Activated CD4-positive, alpha-beta memory T cell treated with anti-CD3 and anti-CD28 coated beads, Interleukin-2, amount 10 ng/mL, durations not matched to agents 7 days and 5 days (primary cell): ENCODE measurements at regions of chr4 and their contacts with region 1.

Region 1: GRCh38 chr4:40897557-40898203 is 147.9 kb downstream of the NSUN7 start:
- DNase-seq: peak; percentile 58
- H3K4me3 Mint-ChIP-seq: no peak overlapping the region
- H3K27ac Mint-ChIP-seq: no peak overlapping the region
- H3K4me1 Mint-ChIP-seq: peaks cover 7% of the 10 kb centered on the region
- H3K27me3 Mint-ChIP-seq: no peaks in the 10 kb centered on the region

Region 2: DNA sequence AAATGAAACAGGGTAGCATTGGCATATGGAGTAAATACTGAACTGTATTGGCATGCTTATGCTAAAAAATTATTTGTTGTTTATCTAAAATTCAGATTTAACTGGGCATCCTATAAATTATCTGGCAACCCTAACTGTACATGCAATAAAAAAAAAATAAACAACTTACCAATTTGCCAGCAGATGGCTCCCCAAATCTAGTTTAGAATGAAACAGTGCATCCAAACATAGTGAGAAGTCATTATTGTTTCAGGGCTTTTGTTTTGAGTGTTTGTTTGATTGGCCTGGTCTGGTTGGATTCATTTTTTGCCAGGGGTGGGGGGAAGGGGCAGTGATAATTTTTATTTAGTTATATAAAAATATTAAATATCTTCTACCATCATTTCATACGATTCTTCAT is 160.8 kb before region 1 on chr4:
- CTCF ChIA-PET with region 1: interaction called, 13 read pairs
- POLR2A ChIA-PET with region 1: no interaction called
- DNase-seq: no peak
- H3K4me3 Mint-ChIP-seq: no peak overlapping the region
- H3K27ac Mint-ChIP-seq: no peak overlapping the region
- H3K4me1 Mint-ChIP-seq: peaks cover 16% of the 10 kb centered on the region
- H3K27me3 Mint-ChIP-seq: peaks cover 20% of the 10 kb centered on the region

Region 3: GRCh38 chr4:40887288-40888131 is 10.2 kb before region 1 on chr4:
- CTCF ChIA-PET with region 1: interaction called, 13 read pairs
- POLR2A ChIA-PET with region 1: no interaction called
- DNase-seq: no peak
- H3K4me3 Mint-ChIP-seq: no peak overlapping the region
- H3K27ac Mint-ChIP-seq: no peak overlapping the region
- H3K4me1 Mint-ChIP-seq: no peaks in the 10 kb centered on the region
- H3K27me3 Mint-ChIP-seq: peaks cover 18% of the 10 kb centered on the region

Region 4: DNA sequence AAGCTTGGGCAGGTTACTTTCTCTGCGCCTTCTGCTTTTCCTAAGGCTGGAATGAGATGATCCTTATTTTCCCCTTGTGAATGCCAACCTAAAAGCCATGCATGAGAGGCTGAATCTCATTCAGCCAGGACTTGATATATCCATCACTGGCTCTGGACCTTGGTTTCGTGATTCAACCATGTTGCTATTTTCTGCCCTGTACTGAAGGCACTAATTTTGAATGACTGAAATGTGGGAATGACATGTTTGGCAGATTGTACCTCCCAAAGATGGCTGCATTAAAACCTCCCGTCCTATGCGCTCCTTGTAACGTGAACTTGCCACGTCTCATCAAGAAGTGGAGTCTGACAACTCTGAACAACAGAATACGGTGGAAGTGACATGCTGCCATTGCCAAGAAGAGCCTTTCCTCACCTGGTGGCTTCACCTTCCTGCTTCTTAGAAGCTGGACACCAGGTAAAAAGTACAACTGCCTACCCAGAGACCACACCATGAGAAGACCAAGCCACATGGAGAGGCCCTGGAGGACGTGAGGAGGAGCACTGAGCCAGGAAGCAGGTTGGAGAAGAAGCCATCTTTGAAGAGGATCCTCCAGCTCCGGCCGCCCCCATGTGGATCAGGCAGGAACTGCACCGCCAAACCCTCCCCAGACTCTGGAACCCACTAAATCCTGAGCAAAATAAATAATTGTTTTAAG is 26.6 kb after region 1 on chr4:
- CTCF ChIA-PET with region 1: interaction called, 19 read pairs
- POLR2A ChIA-PET with region 1: no interaction called
- DNase-seq: peak; percentile 70
- H3K4me3 Mint-ChIP-seq: no peak overlapping the region
- H3K27ac Mint-ChIP-seq: no peak overlapping the region
- H3K4me1 Mint-ChIP-seq: peaks cover 4% of the 10 kb centered on the region
- H3K27me3 Mint-ChIP-seq: peaks cover 18% of the 10 kb centered on the region

Region 5: DNA sequence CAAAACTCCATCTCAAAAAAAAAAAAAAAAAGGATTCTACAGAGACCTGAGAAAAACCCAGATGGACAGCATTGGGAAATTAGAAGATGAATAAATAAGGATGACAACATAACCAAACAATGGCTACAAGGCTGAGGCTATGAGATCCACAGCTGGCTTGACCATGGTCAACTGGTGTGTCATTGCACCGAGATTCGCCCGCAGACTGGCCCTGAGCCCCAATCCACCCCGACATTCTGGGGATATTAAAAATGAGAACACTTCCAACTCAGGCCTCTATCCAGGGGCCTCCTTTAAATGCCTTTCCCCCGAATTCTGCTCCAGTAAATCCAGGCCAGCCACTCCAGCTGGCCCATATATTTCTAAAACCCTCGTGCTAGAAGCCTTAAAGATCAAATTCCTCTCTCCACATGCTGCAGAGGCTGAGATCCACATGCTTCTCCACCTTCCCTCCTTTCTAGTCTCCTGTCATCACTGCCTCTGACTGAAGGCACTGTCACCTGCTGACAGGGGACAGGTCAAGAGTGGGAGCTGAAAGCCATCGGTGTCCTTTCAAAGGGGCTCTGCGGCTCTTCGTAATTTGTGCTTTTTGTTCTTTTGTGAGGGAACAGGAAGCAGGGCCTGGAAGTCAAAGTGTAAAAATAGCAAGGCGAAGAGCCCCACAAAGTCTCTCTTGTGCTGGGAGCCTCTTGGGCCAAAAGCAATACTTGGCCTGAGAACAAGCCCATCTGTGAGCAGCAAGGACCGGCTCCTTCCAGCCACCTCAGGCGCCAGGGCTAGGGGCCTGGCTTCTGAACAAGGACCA is 55.8 kb after region 1 on chr4:
- CTCF ChIA-PET with region 1: no interaction called
- POLR2A ChIA-PET with region 1: no interaction called
- DNase-seq: no peak
- H3K4me3 Mint-ChIP-seq: no peak overlapping the region
- H3K27ac Mint-ChIP-seq: no peak overlapping the region
- H3K4me1 Mint-ChIP-seq: no peaks in the 10 kb centered on the region
- H3K27me3 Mint-ChIP-seq: no peaks in the 10 kb centered on the region